B cell (primary cell): ENCODE measurements at regions of chr18 and their contacts with region 1.

Region 1: DNA sequence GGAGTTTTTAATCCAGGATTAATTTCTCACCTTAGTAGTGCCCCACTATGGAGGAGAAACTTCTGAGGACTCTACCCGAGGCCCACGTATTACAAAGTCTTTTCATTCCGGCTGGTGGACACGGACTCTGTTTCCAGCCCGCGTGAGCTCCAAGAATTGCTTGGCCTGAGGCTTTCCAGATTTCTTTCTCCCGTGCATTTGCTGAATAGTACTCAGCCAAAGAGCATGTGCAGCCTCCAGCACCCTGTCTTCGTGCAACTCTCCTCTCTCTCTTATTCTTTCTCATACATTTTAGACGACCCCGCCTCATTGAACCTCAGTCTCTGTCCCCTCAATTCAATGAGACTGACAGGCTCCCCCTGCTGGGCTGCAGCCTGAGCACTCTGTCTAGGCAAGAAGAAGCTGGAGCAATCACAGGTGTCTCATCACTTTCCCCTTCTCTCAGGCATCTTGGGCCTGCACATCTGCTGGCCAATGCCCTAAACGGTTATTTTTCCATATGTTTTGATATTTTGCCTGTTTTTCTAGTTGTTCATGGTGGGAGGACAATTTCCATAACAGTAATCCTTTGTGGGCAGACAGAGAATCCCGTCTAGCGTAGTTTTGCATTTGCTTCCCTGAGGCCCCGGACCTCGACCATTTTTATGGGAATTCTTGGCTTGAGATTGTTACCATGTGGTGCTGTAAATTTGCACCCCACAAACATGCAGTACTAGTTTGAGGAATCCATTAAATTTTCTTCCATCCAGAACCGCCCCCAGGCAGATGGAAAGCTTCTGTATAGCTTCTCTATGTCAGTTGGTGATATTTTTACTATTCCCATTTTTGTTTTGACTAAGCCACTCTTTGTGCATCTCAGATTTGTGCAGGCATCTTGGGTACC is 50.1 kb upstream of the LPIN2 start:
- DNase-seq: peak; percentile 65
- ATAC-seq: peak; percentile 73
- H3K4me3 ChIP-seq: no peak overlapping the region
- H3K4me3 Mint-ChIP-seq: no peak overlapping the region
- H3K27ac ChIP-seq: no peak overlapping the region
- H3K27ac Mint-ChIP-seq: peak overlapping the region; percentile 10
- H3K4me1 ChIP-seq: peaks cover 27 to 31% of the 10 kb centered on the region in 2 donors
- H3K4me1 Mint-ChIP-seq: peaks cover 40% of the 10 kb centered on the region
- H3K27me3 ChIP-seq: no peaks in the 10 kb centered on the region
- H3K27me3 Mint-ChIP-seq: no peaks in the 10 kb centered on the region
- CTCF ChIP-seq: peak; percentile 68

Region 2: DNA sequence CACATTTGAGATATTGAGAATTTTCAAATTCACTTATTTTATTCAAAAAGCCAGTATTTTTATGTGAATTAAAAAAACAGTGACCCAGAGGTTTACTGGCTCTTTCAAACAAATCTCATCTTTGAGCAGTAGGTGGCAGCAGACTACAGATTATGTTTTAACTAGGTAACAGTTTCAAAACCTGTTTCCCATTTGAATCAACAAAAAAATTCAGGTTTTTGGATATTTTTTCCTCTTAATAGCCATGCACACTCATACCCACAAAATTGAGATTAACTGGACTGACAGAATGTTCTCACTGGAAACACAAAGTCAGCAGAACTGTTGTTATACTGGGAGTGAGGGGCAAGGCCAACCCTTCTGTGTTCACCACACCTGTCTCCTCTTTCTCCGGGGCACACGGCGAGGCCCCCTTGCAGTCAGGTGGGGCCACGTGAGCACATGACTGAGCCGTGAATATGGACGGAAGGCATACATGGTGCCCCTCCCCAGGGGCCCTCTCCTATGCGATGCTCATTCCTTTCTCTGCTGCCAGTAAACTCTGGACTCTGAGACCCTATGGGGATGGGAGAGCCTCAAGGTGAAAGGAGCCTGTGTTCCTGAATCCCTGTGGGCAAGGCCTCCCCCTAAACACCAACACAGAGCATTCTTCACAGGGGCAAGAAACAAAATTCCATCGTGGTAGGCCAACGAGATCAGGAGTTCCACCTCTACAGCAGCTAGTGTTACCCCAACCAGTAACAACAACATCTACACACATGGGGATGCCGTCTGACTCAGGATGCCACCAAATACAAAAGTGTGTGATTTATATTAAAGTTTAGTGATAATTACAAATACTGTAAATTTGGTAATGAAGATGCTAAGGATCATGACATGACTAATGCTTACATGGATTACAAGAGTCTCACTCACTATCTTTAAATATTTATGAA is 130.5 kb before region 1 on chr18:
- CTCF ChIA-PET with region 1: interaction called, 26 read pairs
- POLR2A ChIA-PET with region 1: no interaction called
- intact Hi-C with region 1: loop called (anchors 1 kb)
- DNase-seq: peak; percentile 78
- ATAC-seq: peak; percentile 73
- H3K4me3 ChIP-seq: no peak overlapping the region
- H3K4me3 Mint-ChIP-seq: no peak overlapping the region
- H3K27ac ChIP-seq: no peak overlapping the region
- H3K27ac Mint-ChIP-seq: peak overlapping the region; percentile 64
- H3K4me1 ChIP-seq: peaks cover 0 to 4% of the 10 kb centered on the region in 2 donors
- H3K4me1 Mint-ChIP-seq: peaks cover 8% of the 10 kb centered on the region
- H3K27me3 ChIP-seq: no peaks in the 10 kb centered on the region
- H3K27me3 Mint-ChIP-seq: no peaks in the 10 kb centered on the region
- CTCF ChIP-seq: peak; percentile 92

Region 3: GRCh38 chr18:2994603-2995432 is 68.2 kb before region 1 on chr18:
- CTCF ChIA-PET with region 1: interaction called, 152 read pairs
- POLR2A ChIA-PET with region 1: interaction called, 4 read pairs
- intact Hi-C with region 1: loop called (anchors 1 kb)
- DNase-seq: peak; percentile 81
- ATAC-seq: peak; percentile 95
- H3K4me3 ChIP-seq: peak overlapping the region in 3 of 5 experiments; percentile 12 to 38 (median 21)
- H3K4me3 Mint-ChIP-seq: peak overlapping the region; percentile 50
- H3K27ac ChIP-seq: peak overlapping the region in 1 of 2 donors; percentile 4
- H3K27ac Mint-ChIP-seq: peak overlapping the region; percentile 29
- H3K4me1 ChIP-seq: peaks cover 9 to 14% of the 10 kb centered on the region in 2 donors
- H3K4me1 Mint-ChIP-seq: peaks cover 35% of the 10 kb centered on the region
- H3K27me3 ChIP-seq: no peaks in the 10 kb centered on the region
- H3K27me3 Mint-ChIP-seq: no peaks in the 10 kb centered on the region
- CTCF ChIP-seq: peak; percentile 68

Region 4: DNA sequence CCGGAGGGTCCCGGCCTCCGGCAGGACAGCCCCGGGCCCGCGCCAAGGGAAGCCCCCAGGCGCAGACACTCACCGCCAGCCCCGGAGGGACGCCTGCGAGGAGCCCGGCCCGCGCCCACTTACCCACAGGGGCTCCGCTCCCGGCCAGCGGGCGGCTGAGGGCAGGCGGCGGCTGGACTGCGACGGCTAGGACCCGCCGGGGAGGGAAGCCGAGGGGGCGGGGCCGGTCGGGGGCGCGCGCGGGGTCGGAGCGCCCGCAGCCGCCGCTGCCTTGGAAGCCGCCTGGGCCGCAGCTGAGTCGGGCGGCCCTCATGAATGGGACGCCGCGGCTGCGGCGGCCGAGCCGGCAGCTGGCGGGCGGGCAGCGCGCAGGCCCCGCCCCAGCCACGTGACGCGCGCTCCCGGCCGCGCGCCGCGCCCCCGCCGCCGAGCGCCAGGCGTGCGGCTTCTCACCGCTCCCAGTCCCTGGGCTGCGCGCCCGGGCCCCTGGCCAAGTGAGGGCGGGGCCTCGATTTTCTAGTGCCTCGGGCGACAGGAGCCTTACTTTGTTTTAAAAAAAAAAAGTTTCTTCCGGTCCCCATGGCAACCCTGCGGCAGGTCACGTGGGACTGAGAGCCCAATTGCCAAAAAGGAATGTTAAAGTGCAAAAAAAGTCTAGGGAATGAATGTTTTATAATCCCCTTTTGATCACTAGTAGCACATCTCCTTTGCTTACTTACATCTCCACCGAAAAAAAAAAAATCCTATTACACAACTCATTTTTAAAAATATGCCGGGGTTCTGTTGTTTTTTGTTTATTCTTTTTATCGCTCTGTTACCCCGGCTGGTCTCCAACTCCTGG is 49.9 kb before region 1 on chr18 and contains the start of gene LPIN2:
- CTCF ChIA-PET with region 1: interaction called, 12 read pairs
- POLR2A ChIA-PET with region 1: no interaction called
- intact Hi-C with region 1: loop called (anchors 1 kb)
- DNase-seq: peak; percentile 96
- ATAC-seq: peak; percentile 83
- H3K4me3 ChIP-seq: peak within 1 kb of the TSS; percentile 43 to 75 (median 73)
- H3K4me3 Mint-ChIP-seq: peak within 1 kb of the TSS; percentile 93
- H3K27ac ChIP-seq: peak within 1 kb of the TSS; percentile 74 to 82
- H3K27ac Mint-ChIP-seq: peak within 1 kb of the TSS; percentile 89
- H3K4me1 ChIP-seq: peaks cover 51 to 54% of the 10 kb centered on the region in 2 donors
- H3K4me1 Mint-ChIP-seq: peaks cover 55% of the 10 kb centered on the region
- H3K27me3 ChIP-seq: no peaks in the 10 kb centered on the region
- H3K27me3 Mint-ChIP-seq: no peaks in the 10 kb centered on the region
- CTCF ChIP-seq: no peak
- total RNA-seq, gene LPIN2: 31.0 and 32.9 TPM in 2 replicates

Region 5: GRCh38 chr18:3074087-3074486 is 11.0 kb after region 1 on chr18:
- CTCF ChIA-PET with region 1: interaction called, 35 read pairs
- POLR2A ChIA-PET with region 1: no interaction called
- intact Hi-C with region 1: no loop called
- DNase-seq: no peak
- ATAC-seq: no peak
- H3K4me3 ChIP-seq: no peak overlapping the region
- H3K4me3 Mint-ChIP-seq: no peak overlapping the region
- H3K27ac ChIP-seq: no peak overlapping the region
- H3K27ac Mint-ChIP-seq: no peak overlapping the region
- H3K4me1 ChIP-seq: no peaks in the 10 kb centered on the region
- H3K4me1 Mint-ChIP-seq: no peaks in the 10 kb centered on the region
- H3K27me3 ChIP-seq: no peaks in the 10 kb centered on the region
- H3K27me3 Mint-ChIP-seq: no peaks in the 10 kb centered on the region
- CTCF ChIP-seq: no peak

Region 6: DNA sequence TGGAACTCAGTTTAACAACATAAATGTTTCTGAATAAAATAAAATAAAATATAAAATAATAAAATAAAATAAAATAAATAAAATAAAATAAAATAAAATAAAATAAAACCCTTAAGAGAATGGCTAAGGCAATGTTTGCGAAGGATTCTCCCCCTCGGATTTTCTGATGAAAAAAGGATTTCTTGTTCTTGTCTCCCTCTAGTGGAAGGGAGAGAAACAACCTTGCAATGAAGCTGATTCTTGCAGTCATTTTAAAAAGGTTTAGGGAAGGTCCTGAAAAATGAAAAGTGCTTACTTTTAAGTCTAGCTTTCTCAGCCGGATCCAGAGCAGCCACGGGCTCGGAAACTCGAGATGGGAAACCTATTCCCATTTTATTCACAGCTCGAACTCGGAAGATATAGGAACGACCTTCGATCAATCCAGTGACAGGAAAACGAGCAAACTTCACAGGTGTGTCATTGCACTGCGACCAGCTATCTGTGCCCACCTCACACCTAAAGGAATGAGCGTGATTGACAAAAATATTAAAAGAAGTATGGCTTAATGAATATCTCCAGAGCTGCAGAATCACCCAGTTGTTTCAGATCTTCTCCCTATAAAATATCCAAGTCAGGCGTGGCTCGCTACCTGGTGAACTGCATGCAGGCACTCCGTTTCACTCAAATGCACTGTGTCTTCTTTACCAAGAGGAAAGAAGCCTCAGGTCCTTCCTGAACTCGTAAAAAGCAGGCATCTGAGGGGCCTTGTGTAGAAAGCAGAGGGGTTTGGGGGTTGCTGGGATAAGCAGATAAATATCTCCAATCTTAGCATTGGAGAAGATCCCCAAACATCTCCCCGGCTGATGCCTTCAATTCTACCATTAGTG is 88.6 kb after region 1 on chr18:
- CTCF ChIA-PET with region 1: interaction called, 12 read pairs
- POLR2A ChIA-PET with region 1: no interaction called
- intact Hi-C with region 1: no loop called
- DNase-seq: peak; percentile 50
- ATAC-seq: peak; percentile 33
- H3K4me3 ChIP-seq: no peak overlapping the region
- H3K4me3 Mint-ChIP-seq: no peak overlapping the region
- H3K27ac ChIP-seq: no peak overlapping the region
- H3K27ac Mint-ChIP-seq: no peak overlapping the region
- H3K4me1 ChIP-seq: no peaks in the 10 kb centered on the region
- H3K4me1 Mint-ChIP-seq: peaks cover 7% of the 10 kb centered on the region
- H3K27me3 ChIP-seq: no peaks in the 10 kb centered on the region
- H3K27me3 Mint-ChIP-seq: no peaks in the 10 kb centered on the region
- CTCF ChIP-seq: peak; percentile 95

Region 7: GRCh38 chr18:3616142-3616541 is 553.1 kb after region 1 on chr18:
- CTCF ChIA-PET with region 1: no interaction called
- POLR2A ChIA-PET with region 1: no interaction called
- intact Hi-C with region 1: no loop called
- DNase-seq: no peak
- ATAC-seq: no peak
- H3K4me3 ChIP-seq: no peak overlapping the region
- H3K4me3 Mint-ChIP-seq: no peak overlapping the region
- H3K27ac ChIP-seq: no peak overlapping the region
- H3K27ac Mint-ChIP-seq: no peak overlapping the region
- H3K4me1 ChIP-seq: no peaks in the 10 kb centered on the region
- H3K4me1 Mint-ChIP-seq: no peaks in the 10 kb centered on the region
- H3K27me3 ChIP-seq: no peaks in the 10 kb centered on the region
- H3K27me3 Mint-ChIP-seq: no peaks in the 10 kb centered on the region
- CTCF ChIP-seq: no peak